ENCODE measurements at regions of chr16 and their contacts with region 1.

Region 1: DNA sequence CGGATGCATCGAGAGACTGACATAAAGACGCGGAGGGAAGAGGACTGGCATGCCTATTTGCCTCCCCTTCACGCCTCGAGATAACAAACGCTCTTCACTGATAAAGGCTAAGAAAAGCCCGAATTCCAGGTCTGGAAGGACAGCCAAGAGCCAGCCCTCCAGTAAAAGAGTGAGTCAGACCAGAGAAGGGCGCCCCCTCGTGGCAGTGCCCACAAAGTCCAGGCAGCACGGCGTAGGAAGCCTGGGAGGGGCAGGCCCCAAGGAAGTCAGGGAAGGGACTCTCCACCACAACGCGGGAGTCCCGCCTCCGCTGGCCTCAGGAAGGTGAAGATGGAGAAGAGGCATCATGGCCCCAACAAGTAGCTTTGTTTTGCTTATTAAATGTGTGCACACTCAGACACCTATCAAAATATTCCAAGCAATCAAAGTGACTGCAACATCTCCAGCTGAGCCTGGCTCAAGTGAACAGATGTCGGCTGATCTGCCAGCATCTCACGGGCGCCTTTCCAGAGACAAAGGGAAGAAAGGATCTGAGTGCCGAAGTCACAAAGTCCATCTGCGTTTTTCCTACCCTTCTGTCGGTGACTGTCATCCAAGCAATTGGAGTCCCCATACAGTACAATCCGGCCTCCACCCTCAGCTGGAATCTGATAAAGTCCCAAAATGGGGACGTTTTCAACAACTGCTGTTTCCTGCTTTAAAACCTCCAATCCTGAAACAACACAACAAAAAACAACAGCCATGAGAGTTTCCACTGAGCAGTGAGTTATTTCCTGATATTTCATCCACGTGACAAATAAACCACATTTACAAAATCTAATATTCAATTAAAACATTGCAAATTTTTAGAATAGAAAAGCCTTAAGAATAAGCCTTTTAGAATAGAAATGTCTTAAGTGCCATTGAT is 20.4 kb upstream of the SLC38A8 start:
- DNase-seq: peak; percentile 63 to 92 (median 82)

Region 2: GRCh38 chr16:83958137-83958845 is 104.7 kb before region 1 on chr16:
- intact Hi-C with region 1: loop called (anchors 2 kb)
- DNase-seq: no peak

Measured in head of caudate nucleus (tissue), 42 donors.